Common myeloid progenitor, CD34-positive (primary cell): ENCODE measurements at regions of chr19 and their contacts with region 1.

Region 1: DNA sequence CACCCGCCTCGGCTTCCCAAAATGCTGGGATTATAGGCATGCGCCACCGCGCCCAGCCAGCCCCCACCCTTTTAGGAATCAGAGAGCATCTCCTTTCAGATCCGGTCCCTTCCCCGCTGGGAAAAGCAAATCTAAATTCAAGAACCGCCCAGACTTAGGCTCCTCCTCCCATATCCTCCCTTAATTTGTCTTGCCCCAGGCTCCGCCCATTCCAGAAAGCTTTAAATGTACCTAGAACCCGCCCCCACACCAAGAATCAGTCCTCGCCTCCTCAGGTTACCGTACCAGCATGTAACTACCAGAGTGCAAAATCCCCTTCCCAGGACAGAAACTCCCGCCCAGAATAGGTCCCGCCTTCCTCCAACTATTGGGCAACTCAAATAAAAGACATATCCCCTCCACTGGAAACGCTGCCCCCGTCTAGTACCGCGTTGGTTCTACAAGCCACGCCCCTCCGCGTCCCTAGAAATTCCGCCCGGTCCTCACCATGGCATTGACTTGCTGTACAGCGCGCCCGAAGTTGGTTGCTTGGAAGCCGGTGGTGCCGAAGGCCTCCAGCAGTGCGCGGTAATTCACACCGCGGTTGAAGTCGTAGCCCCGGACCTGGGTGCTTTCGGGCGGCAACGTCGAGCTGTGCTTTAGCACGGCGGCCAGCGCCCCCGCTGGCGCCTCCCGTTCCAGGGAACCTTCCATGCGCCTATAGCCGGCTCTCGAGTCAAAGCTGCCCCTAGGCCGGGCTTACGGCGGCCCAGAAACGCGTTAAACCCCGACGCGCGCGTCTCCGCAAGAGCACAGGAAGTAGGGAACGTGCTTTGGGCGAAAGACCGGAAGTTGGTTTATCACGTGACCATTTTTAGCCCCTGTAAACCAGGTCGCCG is at the start of gene DHPS:
- DNase-seq: peak; percentile 99 to 100 (median 100)
- H3K4me3 ChIP-seq: peak within 1 kb of the TSS; percentile 56 to 94 (median 87)
- H3K27ac ChIP-seq: peak within 1 kb of the TSS; percentile 81 to 94
- H3K4me1 ChIP-seq: peaks cover 0 to 16% (median 11%) of the 10 kb centered on the region in 4 experiments
- H3K27me3 ChIP-seq: no peaks in the 10 kb centered on the region

Region 2: DNA sequence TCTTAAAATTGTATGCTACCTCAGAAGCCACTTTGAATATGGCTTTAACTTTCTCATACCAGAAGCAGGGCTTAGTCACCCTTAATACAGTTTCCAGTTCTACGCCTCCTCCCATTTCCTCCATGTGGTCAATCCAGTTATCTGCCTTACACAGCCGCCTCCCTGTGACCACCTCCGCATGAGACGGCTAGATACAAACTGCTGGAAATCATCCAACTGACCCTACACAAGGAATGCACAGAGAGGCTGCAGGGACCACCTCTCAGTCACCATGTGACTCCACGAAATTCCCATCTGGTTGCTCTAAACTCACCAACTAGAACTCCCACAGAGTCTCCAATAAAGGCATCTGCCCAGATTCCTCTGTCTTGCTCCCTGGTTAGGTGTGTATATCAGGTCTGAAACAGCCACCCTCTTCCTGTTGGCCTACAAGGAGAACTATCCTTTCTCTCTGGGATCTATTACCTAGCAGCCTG is 136.9 kb before region 1 on chr19:
- CTCF ChIA-PET with region 1: no interaction called
- POLR2A ChIA-PET with region 1: no interaction called
- DNase-seq: peak; percentile 92 to 97 (median 97)
- H3K4me3 ChIP-seq: peak overlapping the region in 3 of 7 experiments; percentile 37 to 58 (median 46)
- H3K27ac ChIP-seq: peak overlapping the region; percentile 41 to 77
- H3K4me1 ChIP-seq: peaks cover 0 to 23% (median 12%) of the 10 kb centered on the region in 4 experiments
- H3K27me3 ChIP-seq: no peaks in the 10 kb centered on the region

Region 3: DNA sequence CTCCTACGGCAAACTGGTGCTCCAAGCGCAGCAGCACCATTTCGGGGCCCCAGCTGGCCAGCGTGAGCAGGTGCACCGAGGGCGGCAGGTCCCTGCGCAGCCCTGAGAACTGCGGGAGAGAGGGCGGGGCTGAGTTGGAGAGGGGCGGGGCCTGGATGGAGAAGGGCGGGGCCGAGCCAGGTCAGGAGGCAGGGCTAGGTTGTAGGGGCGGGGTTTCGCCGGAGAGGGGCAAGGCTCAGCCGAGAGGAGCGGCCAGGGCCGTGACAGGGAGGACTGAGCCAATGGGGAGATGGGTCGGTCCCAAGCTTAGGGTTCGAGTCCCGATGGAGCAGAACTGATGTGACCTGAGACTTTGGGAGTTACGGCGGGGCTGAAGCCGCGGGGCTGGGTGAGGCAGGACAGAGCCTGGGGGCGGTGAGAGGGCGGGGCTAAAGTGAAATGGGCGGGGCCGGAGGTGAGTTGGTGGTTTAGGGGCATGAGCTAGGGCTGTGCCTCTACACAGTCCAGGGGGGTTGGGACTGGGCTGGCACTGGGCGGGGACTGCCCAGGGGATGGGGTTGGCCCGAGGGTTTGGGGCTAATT is 33.7 kb before region 1 on chr19:
- CTCF ChIA-PET with region 1: no interaction called
- POLR2A ChIA-PET with region 1: no interaction called
- DNase-seq: peak in 2 of 3 donors; percentile 67 to 69
- H3K4me3 ChIP-seq: peak overlapping the region in 4 of 7 experiments; percentile 10 to 67 (median 49)
- H3K27ac ChIP-seq: no peak overlapping the region
- H3K4me1 ChIP-seq: peaks cover 0 to 10% (median 3%) of the 10 kb centered on the region in 4 experiments
- H3K27me3 ChIP-seq: no peaks in the 10 kb centered on the region

Region 4: GRCh38 chr19:12696366-12697335 is 15.3 kb after region 1 on chr19 and contains the start of gene FBXW9:
- CTCF ChIA-PET with region 1: interaction called, 27 read pairs
- POLR2A ChIA-PET with region 1: interaction called, 10 read pairs
- DNase-seq: peak; percentile 99
- H3K4me3 ChIP-seq: peak within 1 kb of the TSS; percentile 60 to 93 (median 84)
- H3K27ac ChIP-seq: peak within 1 kb of the TSS; percentile 68 to 87
- H3K4me1 ChIP-seq: peaks cover 7 to 43% (median 32%) of the 10 kb centered on the region in 4 experiments
- H3K27me3 ChIP-seq: no peaks in the 10 kb centered on the region

Region 5: DNA sequence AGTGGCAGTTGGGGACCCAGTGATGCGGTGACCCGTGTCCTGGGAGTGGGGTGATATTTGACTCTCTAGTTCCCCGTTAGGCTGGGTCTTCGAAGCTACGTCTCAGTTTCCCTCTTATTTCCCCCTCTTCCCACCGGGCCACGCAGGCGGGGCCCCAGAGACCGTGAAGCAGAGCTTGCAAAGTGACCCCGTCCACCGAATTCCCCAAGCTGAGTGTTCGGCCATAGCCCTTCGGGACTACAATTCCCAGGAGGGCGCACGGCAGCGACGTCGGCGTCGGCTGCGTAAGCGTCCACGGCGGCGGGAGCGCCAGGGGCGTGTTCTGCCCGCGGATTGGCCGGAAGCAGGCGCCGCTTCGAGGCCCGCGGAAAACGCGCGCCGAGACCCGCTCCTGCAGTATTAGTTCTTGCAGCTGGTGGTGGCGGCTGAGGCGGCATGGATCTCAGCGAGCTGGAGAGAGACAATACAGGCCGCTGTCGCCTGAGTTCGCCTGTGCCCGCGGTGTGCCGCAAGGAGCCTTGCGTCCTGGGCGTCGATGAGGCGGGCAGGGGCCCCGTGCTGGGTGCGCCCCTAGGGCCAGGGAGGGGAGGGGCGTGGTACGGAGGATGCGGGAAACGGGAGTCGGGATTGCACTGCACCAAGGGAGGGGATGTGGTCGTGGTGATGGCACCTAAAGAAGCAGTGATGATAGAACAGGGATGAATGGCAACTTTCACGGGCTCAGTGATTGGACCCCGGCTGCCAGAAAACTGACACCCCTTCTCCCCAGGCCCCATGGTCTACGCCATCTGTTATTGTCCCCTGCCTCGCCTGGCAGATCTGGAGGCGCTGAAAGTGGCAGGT is 125.1 kb after region 1 on chr19 and contains the start of gene RNASEH2A:
- CTCF ChIA-PET with region 1: no interaction called
- POLR2A ChIA-PET with region 1: no interaction called
- DNase-seq: peak; percentile 83 to 92 (median 91)
- H3K4me3 ChIP-seq: peak within 1 kb of the TSS; percentile 36 to 85 (median 74)
- H3K27ac ChIP-seq: peak within 1 kb of the TSS in 1 of 2 experiments; percentile 74
- H3K4me1 ChIP-seq: peaks cover 0 to 25% (median 24%) of the 10 kb centered on the region in 4 experiments
- H3K27me3 ChIP-seq: peaks cover 0 to 3% (median 0%) of the 10 kb centered on the region in 5 experiments